ENCODE measurements at regions of chr21 and their contacts with region 1.

Region 1: GRCh38 chr21:32666258-32666657 is 54.1 kb upstream of the CFAP298 start:
- DNase-seq: no peak
- ATAC-seq: no peak
- H3K4me3 ChIP-seq: no peak overlapping the region
- H3K27ac ChIP-seq: no peak overlapping the region
- H3K4me1 ChIP-seq: no peaks in the 10 kb centered on the region
- H3K27me3 ChIP-seq: no peaks in the 10 kb centered on the region
- CTCF ChIP-seq: no peak

Region 2: GRCh38 chr21:32484706-32485380 is 181.4 kb before region 1 on chr21:
- intact Hi-C with region 1: no loop called
- DNase-seq: peak; percentile 23 to 55
- ATAC-seq: no peak
- H3K4me3 ChIP-seq: no peak overlapping the region
- H3K27ac ChIP-seq: no peak overlapping the region
- H3K4me1 ChIP-seq: no peaks in the 10 kb centered on the region
- H3K27me3 ChIP-seq: no peaks in the 10 kb centered on the region
- CTCF ChIP-seq: no peak

Region 3: GRCh38 chr21:32702702-32703101 is 36.4 kb after region 1 on chr21:
- intact Hi-C with region 1: no loop called
- DNase-seq: no peak
- ATAC-seq: no peak
- H3K4me3 ChIP-seq: no peak overlapping the region
- H3K27ac ChIP-seq: no peak overlapping the region
- H3K4me1 ChIP-seq: no peaks in the 10 kb centered on the region
- H3K27me3 ChIP-seq: no peaks in the 10 kb centered on the region
- CTCF ChIP-seq: no peak

Region 4: DNA sequence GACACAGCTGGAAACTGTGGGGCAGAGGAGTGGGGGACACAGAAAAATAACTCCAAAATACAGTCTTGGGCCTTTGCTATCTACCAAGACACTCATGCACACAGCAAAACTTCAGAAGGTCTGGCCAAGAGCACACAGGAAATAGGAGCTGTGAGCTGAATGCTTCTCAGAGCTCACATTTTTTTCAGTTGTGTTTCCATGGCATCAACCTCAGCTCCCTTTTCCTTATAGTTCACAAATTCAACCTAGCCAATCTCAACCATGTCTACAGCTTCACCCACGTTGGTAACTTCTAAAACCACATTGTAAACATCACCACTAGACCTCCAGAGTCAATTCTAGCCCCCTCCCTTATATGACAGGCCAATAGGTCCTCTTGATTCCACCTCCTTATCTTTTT is 81.1 kb after region 1 on chr21:
- intact Hi-C with region 1: loop called in 1 of 2 experiments (anchors 10 kb)
- DNase-seq: no peak
- ATAC-seq: no peak
- H3K4me3 ChIP-seq: no peak overlapping the region
- H3K27ac ChIP-seq: no peak overlapping the region
- H3K4me1 ChIP-seq: no peaks in the 10 kb centered on the region
- H3K27me3 ChIP-seq: no peaks in the 10 kb centered on the region
- CTCF ChIP-seq: no peak

Region 5: DNA sequence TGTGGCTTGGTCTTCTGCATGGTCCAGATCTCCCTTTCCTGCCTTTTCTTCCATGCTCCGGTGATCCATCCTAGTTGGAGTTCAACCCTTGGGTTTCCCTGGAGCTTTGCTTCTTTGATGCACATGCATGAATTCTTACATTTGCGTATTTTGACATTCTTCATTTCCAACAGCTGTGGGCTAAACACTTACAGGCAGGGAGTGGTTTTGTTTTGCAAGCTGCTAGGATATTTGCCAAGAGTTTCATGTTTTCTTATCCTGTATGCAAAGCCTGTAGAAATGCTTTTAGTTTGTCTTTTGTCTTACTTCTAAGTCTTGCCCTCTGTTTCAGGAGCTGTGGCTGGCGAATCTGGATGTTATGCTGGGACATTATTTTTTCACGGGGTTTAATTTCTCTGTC is 195.6 kb after region 1 on chr21:
- intact Hi-C with region 1: no loop called
- DNase-seq: no peak
- ATAC-seq: no peak
- H3K4me3 ChIP-seq: no peak overlapping the region
- H3K27ac ChIP-seq: no peak overlapping the region
- H3K4me1 ChIP-seq: no peaks in the 10 kb centered on the region
- H3K27me3 ChIP-seq: peaks cover 0 to 6% (median 0%) of the 10 kb centered on the region in 3 donors
- CTCF ChIP-seq: no peak

Measured in psoas muscle (tissue), 8 donors.